AG04449 (cell line): ENCODE measurements at regions of chr3 and their contacts with region 1.

Region 1: DNA sequence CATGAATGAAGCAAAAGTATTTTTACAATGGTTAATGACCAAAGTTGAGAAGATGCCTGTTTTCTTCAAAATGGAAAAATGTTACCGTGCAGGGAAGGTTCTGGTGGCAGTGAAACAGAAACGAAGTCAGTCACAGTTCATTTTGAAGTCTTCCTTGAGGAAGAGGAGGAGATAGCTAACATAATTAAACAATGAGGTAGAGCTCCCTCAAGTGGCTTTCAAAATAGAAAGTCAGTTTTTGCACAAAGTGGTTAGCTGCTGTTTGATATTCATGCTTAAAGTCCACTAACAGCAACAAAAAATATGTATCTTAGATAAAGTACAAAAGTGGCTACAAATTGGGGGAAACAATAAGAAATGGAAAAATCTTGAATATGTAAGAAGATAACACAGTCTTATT is 87.3 kb downstream of the TFG start:
- DNase-seq: no peak
- H3K4me3 ChIP-seq: no peak overlapping the region
- CTCF ChIP-seq: no peak

Region 2: DNA sequence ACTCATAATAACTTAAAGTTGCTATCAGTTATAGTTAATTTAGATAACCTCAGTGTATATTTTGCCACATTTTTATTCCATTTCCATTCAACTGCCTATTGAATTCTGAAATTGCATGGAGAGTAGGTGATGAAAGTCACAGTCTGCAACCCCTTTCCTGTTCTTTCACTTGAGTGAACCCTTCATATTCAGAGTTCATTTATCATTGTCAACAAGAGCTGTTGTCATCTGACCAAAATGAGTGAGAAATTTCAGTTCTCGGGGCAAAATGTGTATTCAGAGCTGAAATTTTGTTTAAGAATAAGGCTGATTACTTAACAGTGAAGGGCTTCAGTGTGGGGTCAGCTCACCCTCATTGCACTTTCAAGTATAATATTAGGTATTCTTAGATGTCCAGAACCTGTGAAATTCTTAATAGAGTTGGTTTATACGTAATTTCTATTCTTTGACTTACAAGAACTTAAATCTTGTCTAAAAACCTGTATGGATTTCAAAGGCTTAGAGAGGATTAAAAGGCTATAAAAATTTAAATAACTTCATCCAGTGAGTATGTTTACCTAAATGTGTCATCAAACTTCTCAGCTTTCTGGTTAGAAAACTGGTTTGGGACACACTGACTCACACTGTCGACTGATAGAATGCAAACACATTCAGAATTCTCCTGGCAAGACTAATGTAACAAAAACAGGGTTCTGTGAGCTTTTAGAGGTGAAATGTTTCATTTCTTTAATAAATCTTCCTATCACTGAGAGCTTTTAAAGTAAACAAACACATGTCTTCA is 886.7 kb before region 1 on chr3:
- CTCF ChIA-PET with region 1: no interaction called
- POLR2A ChIA-PET with region 1: no interaction called
- DNase-seq: no peak
- H3K4me3 ChIP-seq: no peak overlapping the region
- CTCF ChIP-seq: no peak

Region 3: DNA sequence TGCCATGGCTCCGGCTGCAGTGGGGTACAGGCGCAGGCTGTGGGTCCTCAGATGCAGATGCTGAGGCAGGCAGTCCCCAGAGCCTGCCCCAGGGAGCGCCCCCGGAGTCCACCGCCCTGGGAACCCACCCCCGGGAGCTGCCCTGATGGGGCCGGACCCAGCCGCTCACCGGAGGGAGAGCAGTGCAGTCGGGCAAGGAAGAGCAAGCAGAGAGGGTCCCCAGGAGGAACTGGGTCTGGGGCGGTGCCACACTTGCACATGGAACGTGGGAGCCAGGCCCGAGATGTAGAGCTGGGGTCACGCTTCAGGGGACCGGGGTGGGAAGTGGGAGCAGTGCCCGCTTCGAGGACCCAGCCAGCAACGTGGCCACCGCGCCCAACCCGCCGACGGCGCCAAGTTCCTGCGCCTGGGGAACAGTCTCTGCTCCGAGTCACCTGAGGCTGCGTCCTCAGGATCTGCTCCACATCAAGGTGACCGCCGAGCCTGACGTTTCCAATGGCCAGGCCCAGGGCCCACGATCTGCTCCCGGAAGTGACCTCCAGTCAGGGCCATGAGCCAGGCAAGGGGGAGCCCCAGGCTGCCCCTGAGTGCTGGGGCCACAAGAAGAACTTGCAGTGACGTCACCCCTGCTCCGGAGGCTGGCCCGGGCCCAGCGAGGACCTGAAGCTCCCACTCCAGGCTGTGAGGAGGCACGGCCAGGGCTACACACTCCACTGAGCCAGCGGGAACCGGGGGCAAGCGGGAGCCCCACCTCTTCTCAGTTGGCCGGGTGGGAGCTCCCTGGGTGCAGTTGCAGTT is 114.3 kb before region 1 on chr3:
- CTCF ChIA-PET with region 1: no interaction called
- POLR2A ChIA-PET with region 1: no interaction called
- DNase-seq: no peak
- H3K4me3 ChIP-seq: no peak overlapping the region; the same call in 1 of the 2 replicates
- CTCF ChIP-seq: no peak

Region 4: DNA sequence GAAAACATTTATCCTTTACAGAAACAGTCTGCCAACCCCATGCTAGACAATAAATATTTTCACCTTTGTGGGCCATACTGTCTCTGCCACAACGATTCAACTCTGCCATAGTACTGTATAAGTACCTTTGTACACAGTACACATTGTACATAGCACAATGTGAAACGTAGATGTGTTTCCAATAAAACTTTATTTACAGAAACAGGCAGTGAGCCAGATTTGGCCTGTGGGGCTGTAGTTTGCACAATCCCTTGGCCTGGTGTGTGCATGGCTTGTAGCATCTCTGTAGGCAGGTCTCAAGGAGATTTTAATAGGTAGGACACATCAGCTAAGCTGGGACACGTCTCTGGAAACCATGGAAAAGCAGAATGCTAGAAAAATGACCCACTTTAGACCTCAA is 12.9 kb before region 1 on chr3:
- CTCF ChIA-PET with region 1: interaction called, 19 read pairs
- POLR2A ChIA-PET with region 1: no interaction called
- DNase-seq: no peak
- H3K4me3 ChIP-seq: no peak overlapping the region
- CTCF ChIP-seq: no peak